Common myeloid progenitor, CD34-positive (primary cell): ENCODE measurements at regions of chr11 and their contacts with region 1.

Region 1: GRCh38 chr11:112537846-112538330 is 277.2 kb upstream of the PLET1 start:
- DNase-seq: peak in 2 of 3 donors; percentile 33 to 44
- H3K4me3 ChIP-seq: no peak overlapping the region
- H3K27ac ChIP-seq: no peak overlapping the region
- H3K4me1 ChIP-seq: no peaks in the 10 kb centered on the region
- H3K27me3 ChIP-seq: peaks cover 0 to 10% (median 2%) of the 10 kb centered on the region in 5 experiments

Region 2: DNA sequence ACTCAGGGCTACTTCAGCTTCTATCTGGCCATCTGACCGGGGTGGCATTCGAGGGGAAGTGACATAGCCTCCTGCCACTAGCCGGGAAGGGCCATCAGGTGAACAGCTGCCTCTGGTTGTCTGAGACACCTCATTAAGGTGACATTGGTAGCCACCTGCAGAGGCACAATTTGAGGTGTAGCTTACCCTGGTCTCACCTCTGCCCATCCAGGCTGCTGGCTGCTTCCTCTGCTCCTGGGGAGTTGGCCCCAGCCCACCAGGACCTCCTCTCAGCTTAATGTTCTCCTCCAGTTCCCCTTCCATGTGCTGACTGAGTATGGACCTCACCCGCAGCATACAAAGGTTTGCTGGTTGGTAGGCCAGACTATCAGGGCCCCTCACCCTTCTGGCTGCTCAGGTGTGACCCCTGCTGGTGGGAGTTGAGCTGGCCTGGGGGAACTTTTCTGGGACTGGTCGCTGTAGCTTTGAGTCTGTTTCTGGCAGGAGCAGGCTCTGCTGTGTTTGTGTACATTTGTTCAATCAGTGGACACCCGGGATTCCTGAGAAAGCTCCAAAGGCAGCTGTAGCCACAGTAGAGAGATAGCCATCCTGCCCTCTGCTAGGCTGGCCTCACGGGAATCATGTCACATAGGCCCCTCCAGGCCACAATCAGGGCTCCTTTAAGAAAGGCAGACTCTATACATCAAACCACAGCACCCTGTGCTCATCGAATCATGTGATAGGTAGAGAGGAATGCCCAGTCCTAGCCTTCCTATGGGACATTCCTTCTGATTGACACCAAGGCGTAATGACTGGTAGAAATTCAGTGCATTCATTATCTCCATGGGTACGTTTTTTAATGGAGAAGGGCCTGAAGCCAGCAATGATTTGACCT is 17.8 kb after region 1 on chr11:
- CTCF ChIA-PET with region 1: interaction called, 11 read pairs
- POLR2A ChIA-PET with region 1: no interaction called
- DNase-seq: peak; percentile 50 to 77 (median 73)
- H3K4me3 ChIP-seq: no peak overlapping the region
- H3K27ac ChIP-seq: no peak overlapping the region
- H3K4me1 ChIP-seq: no peaks in the 10 kb centered on the region
- H3K27me3 ChIP-seq: no peaks in the 10 kb centered on the region